ENCODE measurements at regions of chr19 and their contacts with region 1.

Region 1: GRCh38 chr19:43950834-43951645 is at the start of gene ZNF221:
- DNase-seq: peak; percentile 80 to 92 (median 88)
- H3K4me3 ChIP-seq: peak within 1 kb of the TSS; percentile 54 to 99 (median 85)
- H3K27ac ChIP-seq: peak within 1 kb of the TSS in 55 of 59 donors; percentile 2 to 86 (median 71)
- H3K27me3 ChIP-seq: no peaks in the 10 kb centered on the region
- CTCF ChIP-seq: peak in 53 of 56 donors; percentile 19 to 74 (median 59)
- total RNA-seq, gene ZNF221: 7.4 to 29.1 (median 15.2) TPM

Region 2: DNA sequence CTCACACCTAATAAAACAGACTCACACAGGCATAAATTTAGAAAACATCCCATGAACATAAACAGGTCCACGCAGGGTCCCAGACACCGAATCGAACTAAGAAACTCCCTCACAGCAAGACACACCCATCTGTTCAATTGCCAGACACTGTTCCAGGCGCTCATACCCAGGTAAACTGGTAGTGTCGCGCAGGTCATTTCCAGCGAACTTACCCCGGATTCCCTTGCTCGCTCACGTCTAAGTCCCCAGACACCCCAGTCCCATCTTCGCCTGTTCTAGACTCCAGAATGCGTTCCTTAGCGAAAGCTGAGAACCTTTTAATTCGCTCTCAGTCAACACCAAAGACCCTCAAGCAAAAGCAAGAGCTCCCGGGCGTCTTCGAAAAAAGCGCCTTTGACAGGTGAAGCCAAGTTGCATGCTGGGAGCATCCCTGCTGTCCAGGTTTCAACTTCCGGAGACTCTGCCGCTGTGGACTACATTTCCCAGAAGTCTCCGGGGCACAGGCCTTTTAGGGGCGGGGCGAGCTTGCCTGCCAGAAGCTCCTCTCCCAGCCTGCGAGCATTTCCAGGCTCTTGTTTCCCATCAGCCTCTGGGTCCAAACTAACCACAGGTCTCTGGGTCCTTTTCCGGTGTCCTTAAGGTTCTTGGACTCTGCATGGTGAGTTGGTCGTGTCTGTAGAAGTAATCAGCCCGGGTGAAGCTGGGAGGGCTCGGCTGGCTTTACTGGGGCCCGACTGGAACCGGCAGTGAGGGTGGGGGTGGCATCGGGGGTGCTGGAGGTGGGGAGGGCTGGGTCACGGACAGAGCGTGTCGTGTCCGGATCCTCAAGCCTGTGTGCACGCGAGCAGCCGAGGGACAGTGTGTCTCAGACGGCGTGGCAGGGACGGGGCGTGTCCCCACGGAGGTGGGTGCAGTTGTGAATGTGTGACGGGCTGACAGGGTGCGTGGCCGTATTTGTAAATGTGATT is 124.0 kb before region 1 on chr19 and contains the start of gene ZNF283:
- intact Hi-C with region 1: loop called in 1 of 2 experiments (anchors 5 kb)
- DNase-seq: peak; percentile 78 to 95 (median 94)
- H3K4me3 ChIP-seq: peak within 1 kb of the TSS; percentile 50 to 86 (median 76)
- H3K27ac ChIP-seq: peak within 1 kb of the TSS in 36 of 59 donors; percentile 3 to 78 (median 48)
- H3K27me3 ChIP-seq: no peaks in the 10 kb centered on the region
- CTCF ChIP-seq: peak in 22 of 56 donors; percentile 11 to 43 (median 24)
- total RNA-seq, gene ZNF283: 17.2 to 43.0 (median 24.6) TPM

Region 3: DNA sequence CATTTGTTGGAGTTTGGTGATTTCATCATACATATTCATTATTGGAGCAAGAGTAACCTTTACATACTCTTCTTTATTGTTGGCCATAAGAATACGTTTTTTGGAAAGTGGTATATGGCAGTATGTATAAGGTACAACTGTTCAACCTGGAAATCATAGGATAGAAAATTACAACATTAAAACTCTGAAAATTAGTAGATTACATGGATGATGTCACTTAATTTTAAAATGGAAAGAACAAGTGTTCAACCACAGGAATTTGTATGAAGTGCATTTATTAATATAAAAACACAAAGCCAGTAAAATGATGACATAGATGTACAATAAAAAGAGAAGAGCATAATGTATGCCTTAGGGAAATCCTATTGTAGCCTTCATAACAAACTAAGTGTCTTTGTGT is 25.7 kb after region 1 on chr19:
- intact Hi-C with region 1: loop called in 1 of 2 experiments (anchors 1 kb)
- DNase-seq: no peak
- H3K4me3 ChIP-seq: no peak overlapping the region
- H3K27ac ChIP-seq: no peak overlapping the region
- H3K27me3 ChIP-seq: no peaks in the 10 kb centered on the region
- CTCF ChIP-seq: no peak

Region 4: DNA sequence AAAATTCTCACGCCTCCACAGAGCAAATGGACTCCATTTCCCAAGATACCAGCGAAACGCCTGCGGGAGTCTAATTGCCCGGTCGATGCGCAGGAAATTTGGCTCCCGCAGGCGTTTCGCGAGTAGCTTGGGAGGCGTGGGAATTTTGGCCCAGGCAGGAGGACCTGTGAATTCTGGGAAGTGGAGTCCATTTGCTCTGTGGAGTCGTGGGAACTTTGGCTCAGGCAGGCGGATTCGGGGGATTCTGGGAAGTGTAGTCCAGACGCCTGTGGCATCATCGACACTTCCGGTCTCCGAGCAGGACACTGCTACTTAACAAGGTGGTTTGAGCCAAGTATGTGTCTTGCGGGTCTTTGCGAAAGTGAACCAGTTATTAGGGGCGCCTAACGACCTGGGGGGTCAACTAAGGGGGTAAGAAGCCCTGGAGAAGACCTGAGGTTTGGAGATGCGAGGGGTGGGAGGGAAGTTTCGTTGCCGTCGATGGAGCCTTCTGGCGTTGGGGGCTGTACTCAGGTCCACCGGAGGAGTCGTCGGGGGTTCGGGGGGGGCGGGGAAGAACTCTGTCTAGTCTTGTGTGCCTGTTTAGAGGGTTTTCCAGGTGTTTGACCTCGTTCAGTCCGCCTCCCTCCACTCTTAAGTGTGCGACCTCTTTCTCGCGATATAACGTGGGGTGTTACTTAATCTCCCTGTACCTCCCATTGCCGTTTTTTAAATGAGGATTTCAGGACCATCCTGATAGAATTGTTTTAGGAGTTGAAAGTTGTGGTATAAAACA is 33.1 kb after region 1 on chr19 and contains the start of gene ZNF155:
- intact Hi-C with region 1: loop called in 1 of 2 experiments (anchors 2 kb)
- DNase-seq: peak; percentile 88 to 97 (median 95)
- H3K4me3 ChIP-seq: peak within 1 kb of the TSS; percentile 43 to 86 (median 73)
- H3K27ac ChIP-seq: peak within 1 kb of the TSS in 42 of 59 donors; percentile 1 to 84 (median 50)
- H3K27me3 ChIP-seq: no peaks in the 10 kb centered on the region
- CTCF ChIP-seq: peak in 10 of 56 donors; percentile 5 to 35 (median 14)
- total RNA-seq, gene ZNF155: 6.7 to 16.6 (median 10.8) TPM

Measured in dorsolateral prefrontal cortex (tissue), 120 donors.